Activated naive CD4-positive, alpha-beta T cell treated with anti-CD3 and anti-CD28 coated beads for 36 hours (primary cell): ENCODE measurements at regions of chr10 and their contacts with region 1.

Region 1: DNA sequence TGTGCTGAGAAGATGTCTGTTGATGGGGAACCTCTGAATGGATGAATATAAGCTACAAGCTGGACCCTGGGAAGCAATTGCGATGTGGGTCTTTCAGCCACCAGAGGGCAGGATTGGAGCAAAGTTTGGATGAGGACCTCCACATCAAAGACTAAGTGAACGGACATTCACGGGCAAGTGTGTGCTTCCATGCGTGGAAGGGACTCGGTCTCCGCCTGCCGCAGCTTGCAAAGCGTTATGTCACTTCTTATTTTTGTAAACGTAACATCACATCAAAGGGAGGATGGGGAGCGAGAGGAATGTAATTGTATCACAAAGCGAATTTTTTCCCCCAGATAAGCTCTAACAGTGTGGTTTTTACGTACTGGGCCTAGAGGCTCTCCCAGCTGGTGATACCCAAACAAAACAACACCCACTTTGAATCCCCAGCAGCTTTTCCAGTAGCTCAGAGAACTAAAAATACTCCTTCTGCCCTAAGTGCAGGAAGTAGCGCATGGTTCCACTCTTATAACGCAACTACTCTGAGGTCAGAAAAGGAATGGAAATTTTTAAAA is 65.0 kb downstream of the VWA2 start:
- DNase-seq: peak; percentile 90
- H3K4me3 Mint-ChIP-seq: peak overlapping the region; percentile 81
- H3K27ac Mint-ChIP-seq: no peak overlapping the region
- H3K4me1 Mint-ChIP-seq: peaks cover 3% of the 10 kb centered on the region
- H3K27me3 Mint-ChIP-seq: no peaks in the 10 kb centered on the region

Region 2: DNA sequence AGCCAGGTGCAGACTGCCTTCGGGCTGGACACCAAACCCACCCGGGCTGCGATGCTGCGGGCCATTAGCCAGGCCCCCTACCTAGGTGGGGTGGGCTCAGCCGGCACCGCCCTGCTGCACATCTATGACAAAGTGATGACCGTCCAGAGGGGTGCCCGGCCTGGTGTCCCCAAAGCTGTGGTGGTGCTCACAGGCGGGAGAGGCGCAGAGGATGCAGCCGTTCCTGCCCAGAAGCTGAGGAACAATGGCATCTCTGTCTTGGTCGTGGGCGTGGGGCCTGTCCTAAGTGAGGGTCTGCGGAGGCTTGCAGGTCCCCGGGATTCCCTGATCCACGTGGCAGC is 15.0 kb before region 1 on chr10:
- CTCF ChIA-PET with region 1: interaction called, 17 read pairs
- intact Hi-C with region 1: no loop called
- DNase-seq: no peak
- H3K4me3 Mint-ChIP-seq: no peak overlapping the region
- H3K27ac Mint-ChIP-seq: no peak overlapping the region
- H3K4me1 Mint-ChIP-seq: no peaks in the 10 kb centered on the region
- H3K27me3 Mint-ChIP-seq: no peaks in the 10 kb centered on the region

Region 3: DNA sequence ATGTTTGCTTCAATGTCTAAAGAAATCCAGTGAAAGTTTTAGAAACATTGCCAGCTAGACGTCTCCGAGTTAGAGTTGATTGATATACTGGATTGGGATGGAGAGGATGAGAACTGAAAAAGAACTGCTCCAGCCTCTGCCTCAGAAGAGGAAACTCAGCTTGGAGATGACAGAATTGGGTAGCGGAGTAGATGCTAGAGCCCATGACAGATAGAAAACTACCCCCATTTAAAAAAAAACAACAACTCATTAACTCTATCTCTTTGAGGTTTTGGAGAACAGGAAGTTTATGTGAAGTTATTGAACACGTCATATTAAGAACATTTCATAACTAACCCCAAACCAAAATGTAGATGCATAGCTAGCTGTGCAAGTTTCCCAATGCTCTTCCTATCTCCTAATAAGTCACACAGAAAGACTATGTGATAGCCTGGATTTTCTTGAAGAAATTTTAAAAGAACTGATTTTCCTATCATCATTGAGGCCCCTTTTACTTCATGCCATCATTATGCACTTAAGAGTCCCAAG is 128.5 kb after region 1 on chr10:
- CTCF ChIA-PET with region 1: interaction called, 15 read pairs
- intact Hi-C with region 1: loop called (anchors 1 kb)
- DNase-seq: no peak
- H3K4me3 Mint-ChIP-seq: no peak overlapping the region
- H3K27ac Mint-ChIP-seq: no peak overlapping the region
- H3K4me1 Mint-ChIP-seq: peaks cover 2% of the 10 kb centered on the region
- H3K27me3 Mint-ChIP-seq: no peaks in the 10 kb centered on the region

Region 4: GRCh38 chr10:114470956-114471905 is 167.1 kb after region 1 on chr10:
- CTCF ChIA-PET with region 1: interaction called, 6 read pairs
- intact Hi-C with region 1: loop called (anchors 1 kb)
- DNase-seq: peak; percentile 79
- H3K4me3 Mint-ChIP-seq: no peak overlapping the region
- H3K27ac Mint-ChIP-seq: peak overlapping the region; percentile 44
- H3K4me1 Mint-ChIP-seq: peaks cover 22% of the 10 kb centered on the region
- H3K27me3 Mint-ChIP-seq: no peaks in the 10 kb centered on the region

Region 5: GRCh38 chr10:114694752-114695151 is 390.7 kb after region 1 on chr10:
- CTCF ChIA-PET with region 1: interaction called, 7 read pairs
- intact Hi-C with region 1: loop called (anchors 1 kb)
- DNase-seq: peak; percentile 61
- H3K4me3 Mint-ChIP-seq: no peak overlapping the region
- H3K27ac Mint-ChIP-seq: no peak overlapping the region
- H3K4me1 Mint-ChIP-seq: peaks cover 4% of the 10 kb centered on the region
- H3K27me3 Mint-ChIP-seq: peaks cover 2% of the 10 kb centered on the region

Region 6: GRCh38 chr10:114821293-114821914 is 517.3 kb after region 1 on chr10 and contains the start of gene FHIP2A:
- CTCF ChIA-PET with region 1: interaction called, 7 read pairs
- intact Hi-C with region 1: loop called (anchors 1 kb)
- DNase-seq: peak; percentile 80
- H3K4me3 Mint-ChIP-seq: peak within 1 kb of the TSS; percentile 89
- H3K27ac Mint-ChIP-seq: peak within 1 kb of the TSS; percentile 83
- H3K4me1 Mint-ChIP-seq: peaks cover 29% of the 10 kb centered on the region
- H3K27me3 Mint-ChIP-seq: no peaks in the 10 kb centered on the region
- total RNA-seq, gene FHIP2A: 8.7 to 11.4 TPM